GM12878 (cell line): ENCODE measurements at regions of chr20 and their contacts with region 1.

Region 1: GRCh38 chr20:46132705-46133120 is 14.6 kb downstream of the CD40 start:
- DNase-seq: no peak
- ATAC-seq: peak; percentile 76
- H3K4me3 ChIP-seq: no peak overlapping the region
- H3K27ac ChIP-seq: no peak overlapping the region
- H3K4me1 ChIP-seq: peaks cover 21% of the 10 kb centered on the region
- H3K27me3 ChIP-seq: peaks cover 0 to 3% of the 10 kb centered on the region in 2 experiments; a peak in 2 of 4 replicates
- CTCF ChIP-seq: peak; percentile 82 to 87 (median 87)
- EP300 ChIP-seq: no peak
- POLR2A ChIP-seq: peak; percentile 57
- RAD21 ChIP-seq: peak; percentile 80

Region 2: GRCh38 chr20:46022411-46023147 is 110.1 kb before region 1 on chr20:
- CTCF ChIA-PET with region 1: interaction called, 4 read pairs
- POLR2A ChIA-PET with region 1: no interaction called
- RAD21 ChIA-PET with region 1: no interaction called
- SMC1A ChIA-PET with region 1: no interaction called
- in situ Hi-C with region 1: no loop called
- intact Hi-C with region 1: loop called (anchors 2 kb)
- DNase-seq: no peak
- ATAC-seq: peak; percentile 84
- H3K4me3 ChIP-seq: peak overlapping the region; percentile 38; the same call in 1 of the 2 replicates
- H3K27ac ChIP-seq: no peak overlapping the region
- H3K4me1 ChIP-seq: no peaks in the 10 kb centered on the region
- H3K27me3 ChIP-seq: peaks cover 2 to 4% of the 10 kb centered on the region in 2 experiments; a peak in 2 of 4 replicates
- CTCF ChIP-seq: peak; percentile 69 to 88 (median 71)
- EP300 ChIP-seq: no peak
- POLR2A ChIP-seq: no peak
- RAD21 ChIP-seq: peak; percentile 75

Region 3: GRCh38 chr20:46111028-46111835 is 21.5 kb before region 1 on chr20:
- CTCF ChIA-PET with region 1: interaction called, 16 read pairs
- POLR2A ChIA-PET with region 1: interaction called, 5 read pairs
- RAD21 ChIA-PET with region 1: interaction called, 22 read pairs
- SMC1A ChIA-PET with region 1: interaction called, 3 read pairs
- in situ Hi-C with region 1: no loop called
- intact Hi-C with region 1: no loop called
- DNase-seq: peak; percentile 75
- ATAC-seq: peak; percentile 77
- H3K4me3 ChIP-seq: peak overlapping the region; percentile 7; the same call in 1 of the 2 replicates
- H3K27ac ChIP-seq: no peak overlapping the region
- H3K4me1 ChIP-seq: peaks cover 37% of the 10 kb centered on the region
- H3K27me3 ChIP-seq: no peaks in the 10 kb centered on the region
- CTCF ChIP-seq: no peak
- EP300 ChIP-seq: peak; percentile 33 to 51; a peak in 2 of 4 replicates
- POLR2A ChIP-seq: no peak
- RAD21 ChIP-seq: no peak

Region 4: DNA sequence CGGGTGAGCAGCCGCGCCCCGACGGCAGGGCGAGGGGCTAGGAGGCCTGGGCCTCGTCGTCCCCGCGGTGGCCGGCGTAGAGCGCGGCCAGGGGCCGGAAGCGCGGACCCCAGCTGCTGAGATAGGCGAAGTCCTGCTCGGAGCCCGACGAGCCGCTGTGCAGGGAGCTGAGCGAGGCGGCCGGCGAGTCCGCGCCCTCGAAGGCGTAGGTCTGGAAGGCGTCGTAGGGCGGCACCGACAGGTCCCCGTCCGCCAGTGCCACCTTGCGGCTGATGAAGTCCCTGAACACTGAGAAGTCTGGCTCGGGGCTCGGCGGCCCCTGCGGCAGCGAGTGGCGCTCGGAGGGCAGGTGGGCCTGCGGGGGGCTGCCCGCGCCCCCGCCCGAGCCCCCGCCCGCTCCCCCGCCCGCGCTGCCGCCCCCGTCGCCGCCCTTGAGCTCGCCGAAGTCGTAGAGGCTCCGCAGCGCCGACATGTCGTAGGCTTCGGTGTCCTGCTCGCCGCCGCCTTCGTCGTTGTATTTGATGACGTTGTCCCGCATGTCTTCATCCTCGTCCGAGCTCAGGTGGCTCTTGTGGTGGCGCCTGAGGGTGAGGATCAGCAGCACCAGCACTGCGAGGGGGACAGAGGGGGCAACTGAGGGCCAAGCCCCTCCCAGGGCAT is 41.9 kb after region 1 on chr20:
- CTCF ChIA-PET with region 1: interaction called, 9 read pairs
- POLR2A ChIA-PET with region 1: no interaction called
- RAD21 ChIA-PET with region 1: interaction called, 5 read pairs
- SMC1A ChIA-PET with region 1: interaction called, 8 read pairs
- in situ Hi-C with region 1: no loop called
- intact Hi-C with region 1: loop called (anchors 1 kb)
- DNase-seq: no peak
- ATAC-seq: peak; percentile 98
- H3K4me3 ChIP-seq: no peak overlapping the region
- H3K27ac ChIP-seq: no peak overlapping the region
- H3K4me1 ChIP-seq: no peaks in the 10 kb centered on the region
- H3K27me3 ChIP-seq: peaks cover 5 to 12% of the 10 kb centered on the region in 2 experiments; a peak in 3 of 4 replicates
- CTCF ChIP-seq: peak; percentile 51 to 81 (median 79)
- EP300 ChIP-seq: no peak
- POLR2A ChIP-seq: no peak
- RAD21 ChIP-seq: peak; percentile 56; the same call in 1 of the 2 replicates

Region 5: DNA sequence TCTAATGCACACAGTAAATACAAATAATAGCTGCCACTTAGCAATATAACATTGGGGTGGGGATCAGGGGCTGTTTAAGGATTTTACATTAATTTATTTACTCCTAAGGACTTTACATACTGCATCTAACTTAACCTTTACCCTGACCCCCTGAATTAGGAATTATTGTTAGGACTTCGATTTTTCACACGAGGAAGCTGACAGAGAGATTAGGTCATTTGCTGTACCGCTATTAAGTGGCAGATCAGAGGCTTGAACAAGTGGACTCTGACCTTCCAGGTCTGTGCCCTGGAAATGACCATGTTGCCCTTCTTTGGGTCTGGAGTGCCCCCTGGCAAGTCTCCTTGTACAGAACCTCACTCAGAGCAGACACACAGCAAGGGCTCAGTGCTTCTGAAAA is 278.9 kb after region 1 on chr20:
- CTCF ChIA-PET with region 1: interaction called, 8 read pairs
- POLR2A ChIA-PET with region 1: no interaction called
- RAD21 ChIA-PET with region 1: no interaction called
- SMC1A ChIA-PET with region 1: no interaction called
- in situ Hi-C with region 1: no loop called
- intact Hi-C with region 1: loop called (anchors 1 kb)
- DNase-seq: no peak
- ATAC-seq: no peak
- H3K4me3 ChIP-seq: no peak overlapping the region
- H3K27ac ChIP-seq: no peak overlapping the region
- H3K4me1 ChIP-seq: peaks cover 10% of the 10 kb centered on the region
- H3K27me3 ChIP-seq: peaks cover 0 to 1% of the 10 kb centered on the region in 2 experiments; a peak in 2 of 4 replicates
- CTCF ChIP-seq: no peak
- EP300 ChIP-seq: no peak
- POLR2A ChIP-seq: no peak
- RAD21 ChIP-seq: no peak